CD14-positive monocyte (primary cell): ENCODE measurements at regions of chr22 and their contacts with region 1.

Region 1: GRCh38 chr22:41780746-41781505 is 19.6 kb upstream of the CCDC134 start:
- DNase-seq: peak; percentile 99 to 100 (median 99)
- H3K4me3 ChIP-seq: peak overlapping the region; percentile 28 to 56 (median 42)
- H3K4me3 Mint-ChIP-seq: peak overlapping the region; percentile 73 to 83
- H3K27ac ChIP-seq: peak overlapping the region; percentile 92 to 98
- H3K27ac Mint-ChIP-seq: peak overlapping the region; percentile 96 to 99 (median 98)
- H3K4me1 ChIP-seq: peaks cover 46 to 48% of the 10 kb centered on the region in 2 donors
- H3K4me1 Mint-ChIP-seq: peaks cover 58% of the 10 kb centered on the region
- H3K27me3 ChIP-seq: no peaks in the 10 kb centered on the region
- H3K27me3 Mint-ChIP-seq: no peaks in the 10 kb centered on the region
- CTCF ChIP-seq: no peak

Region 2: DNA sequence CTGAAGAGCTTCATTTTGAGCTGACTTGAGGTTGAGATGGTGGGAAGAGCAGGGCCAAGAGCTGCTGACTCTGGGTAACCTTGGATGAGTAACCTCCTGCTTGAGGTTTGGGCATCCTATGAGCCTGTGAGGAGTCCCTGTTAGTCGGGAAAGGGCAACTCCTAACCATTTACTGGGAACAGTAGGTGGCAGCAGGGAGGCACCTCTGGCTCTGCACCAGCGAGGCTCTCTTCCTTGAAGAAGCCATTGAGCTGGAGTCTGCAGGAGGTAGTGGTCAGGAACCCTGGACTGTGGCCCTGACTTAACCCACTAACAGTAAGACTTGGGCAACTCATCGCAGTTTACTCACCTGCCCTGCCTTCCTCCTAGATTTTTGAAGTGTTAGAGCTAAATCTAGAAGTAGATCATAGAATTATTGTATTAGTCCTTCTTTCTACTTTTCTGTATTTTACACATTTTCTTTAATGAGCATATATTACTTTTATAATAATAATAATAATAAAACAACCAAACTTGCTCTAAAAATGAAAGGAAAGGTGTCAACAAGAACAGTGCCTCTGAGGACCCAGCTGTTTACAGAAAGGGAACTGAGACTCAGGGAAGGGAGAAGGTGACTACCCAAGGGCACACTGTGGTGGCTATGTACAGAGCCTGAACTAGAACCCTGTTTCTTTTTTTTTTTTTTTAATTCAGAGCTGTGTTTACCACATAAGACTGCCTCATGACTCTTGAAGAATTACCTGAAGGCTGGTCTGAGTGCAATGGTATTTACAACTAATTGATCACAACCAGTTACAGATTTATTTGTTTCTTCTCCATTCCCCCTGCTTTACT is 34.1 kb before region 1 on chr22:
- intact Hi-C with region 1: loop called in 1 of 2 experiments (anchors 5 kb)
- DNase-seq: peak; percentile 73 to 86 (median 79)
- H3K4me3 ChIP-seq: no peak overlapping the region
- H3K4me3 Mint-ChIP-seq: no peak overlapping the region
- H3K27ac ChIP-seq: no peak overlapping the region
- H3K27ac Mint-ChIP-seq: no peak overlapping the region
- H3K4me1 ChIP-seq: peaks cover 0 to 3% of the 10 kb centered on the region in 2 donors
- H3K4me1 Mint-ChIP-seq: peaks cover 7% of the 10 kb centered on the region
- H3K27me3 ChIP-seq: peaks cover 0 to 4% of the 10 kb centered on the region in 2 donors
- H3K27me3 Mint-ChIP-seq: peaks cover 9 to 15% (median 12%) of the 10 kb centered on the region in 3 donors
- CTCF ChIP-seq: peak; percentile 79

Region 3: GRCh38 chr22:41832553-41833368 is 51.8 kb after region 1 on chr22 and contains the start of gene SREBF2:
- intact Hi-C with region 1: loop called in 1 of 2 experiments (anchors 2 kb)
- DNase-seq: peak; percentile 98 to 99 (median 99)
- H3K4me3 ChIP-seq: peak within 1 kb of the TSS; percentile 63 to 87 (median 83)
- H3K4me3 Mint-ChIP-seq: peak within 1 kb of the TSS; percentile 97
- H3K27ac ChIP-seq: peak within 1 kb of the TSS; percentile 95 to 97
- H3K27ac Mint-ChIP-seq: peak within 1 kb of the TSS; percentile 98 to 100 (median 99)
- H3K4me1 ChIP-seq: peaks cover 28 to 32% of the 10 kb centered on the region in 2 donors
- H3K4me1 Mint-ChIP-seq: peaks cover 34% of the 10 kb centered on the region
- H3K27me3 ChIP-seq: no peaks in the 10 kb centered on the region
- H3K27me3 Mint-ChIP-seq: peaks cover 0 to 3% (median 2%) of the 10 kb centered on the region in 3 donors
- CTCF ChIP-seq: no peak
- polyA plus RNA-seq, gene SREBF2: 22.2 to 25.1 (median 24.5) TPM

Region 4: DNA sequence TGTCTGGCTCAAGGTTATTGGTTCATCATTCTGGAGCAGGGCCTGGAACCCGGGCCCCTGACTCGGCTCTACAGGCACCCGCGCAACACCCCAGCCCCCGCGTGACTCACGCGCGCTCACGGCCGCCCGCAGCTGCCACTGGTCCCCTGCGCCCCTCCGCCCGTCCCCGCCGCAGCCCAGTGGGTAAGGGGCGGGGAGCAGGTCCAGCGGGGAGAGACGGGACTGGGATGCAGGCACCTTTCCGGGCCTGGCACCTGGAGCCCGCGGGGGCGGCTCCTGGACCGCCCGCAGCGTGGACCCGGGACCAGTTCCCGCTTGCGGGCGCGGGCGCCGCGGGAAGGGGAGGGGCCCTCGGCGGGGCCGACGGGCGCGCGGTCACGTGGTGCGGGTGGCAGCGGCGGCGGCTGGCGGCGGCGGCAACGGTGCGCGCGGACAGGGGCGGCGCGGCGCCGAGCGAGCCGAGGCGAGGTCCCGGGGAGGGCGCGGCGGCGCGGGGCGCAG is 195.5 kb after region 1 on chr22:
- intact Hi-C with region 1: no loop called
- DNase-seq: peak; percentile 12 to 54 (median 29)
- H3K4me3 ChIP-seq: peak overlapping the region in 1 of 3 experiments; percentile 69
- H3K4me3 Mint-ChIP-seq: peak overlapping the region; percentile 72 to 84
- H3K27ac ChIP-seq: no peak overlapping the region
- H3K27ac Mint-ChIP-seq: peak overlapping the region in 2 of 7 donors; percentile 30
- H3K4me1 ChIP-seq: peaks cover 7 to 11% of the 10 kb centered on the region in 2 donors
- H3K4me1 Mint-ChIP-seq: peaks cover 11% of the 10 kb centered on the region
- H3K27me3 ChIP-seq: peaks cover 27 to 37% of the 10 kb centered on the region in 2 donors
- H3K27me3 Mint-ChIP-seq: peaks cover 54 to 64% (median 61%) of the 10 kb centered on the region in 3 donors
- CTCF ChIP-seq: no peak